ENCODE measurements at regions of chr2 and their contacts with region 1.

Region 1: GRCh38 chr2:234146087-234146826 is 95.8 kb downstream of the SPP2 start:
- DNase-seq: no peak
- H3K4me3 Mint-ChIP-seq: peak overlapping the region; percentile 54
- H3K27ac Mint-ChIP-seq: peak overlapping the region; percentile 66
- H3K4me1 Mint-ChIP-seq: peaks cover 34% of the 10 kb centered on the region
- H3K27me3 Mint-ChIP-seq: no peaks in the 10 kb centered on the region

Region 2: DNA sequence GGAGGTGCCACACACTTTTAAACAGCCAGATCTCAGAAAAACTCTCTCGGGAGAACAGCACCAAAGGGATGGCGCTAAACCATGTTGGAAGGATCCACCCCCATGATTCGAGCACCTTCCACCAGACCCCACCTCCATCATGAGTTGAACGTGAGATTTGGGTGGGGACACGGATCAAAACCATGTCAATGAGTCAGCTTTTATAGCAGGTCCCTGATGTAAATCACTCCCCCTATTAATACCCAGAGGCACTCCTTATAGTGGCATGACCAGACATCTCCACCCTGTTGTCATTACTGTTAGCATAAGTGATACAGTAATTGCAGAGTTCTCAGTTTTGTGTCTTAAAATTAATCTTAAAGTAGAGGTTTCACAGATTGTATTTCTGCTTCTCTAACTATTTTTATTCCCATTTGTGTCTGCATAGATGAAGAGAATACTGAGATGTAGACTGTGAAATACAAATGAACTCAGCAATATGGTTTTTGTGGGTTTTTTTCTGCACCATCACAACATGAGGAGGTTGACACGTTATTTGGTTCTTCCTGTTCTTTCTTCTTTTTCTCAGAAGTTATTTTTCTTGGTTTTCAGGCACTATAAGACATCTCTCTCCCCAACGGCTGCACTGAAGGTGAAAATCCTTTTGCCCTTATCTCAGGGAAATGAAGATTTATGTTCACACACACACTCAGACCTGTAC is 132.4 kb after region 1 on chr2:
- intact Hi-C with region 1: loop called (anchors 5 kb)
- DNase-seq: peak; percentile 28
- H3K4me3 Mint-ChIP-seq: no peak overlapping the region
- H3K27ac Mint-ChIP-seq: peak overlapping the region; percentile 71
- H3K4me1 Mint-ChIP-seq: peaks cover 66% of the 10 kb centered on the region
- H3K27me3 Mint-ChIP-seq: no peaks in the 10 kb centered on the region